ENCODE measurements at regions of chr20 and their contacts with region 1.

Region 1: GRCh38 chr20:1291191-1291741 is 25.2 kb downstream of the SNPH start:
- DNase-seq: no peak
- H3K4me3 Mint-ChIP-seq: no peak overlapping the region
- H3K27ac Mint-ChIP-seq: no peak overlapping the region
- H3K4me1 Mint-ChIP-seq: peaks cover 54% of the 10 kb centered on the region
- H3K27me3 Mint-ChIP-seq: no peaks in the 10 kb centered on the region

Region 2: GRCh38 chr20:1225783-1226654 is 65.2 kb before region 1 on chr20 and contains the start of gene RAD21L1:
- CTCF ChIA-PET with region 1: no interaction called
- intact Hi-C with region 1: loop called (anchors 2 kb)
- DNase-seq: peak; percentile 88
- H3K4me3 Mint-ChIP-seq: peak within 1 kb of the TSS; percentile 83
- H3K27ac Mint-ChIP-seq: no peak within 1 kb of the TSS
- H3K4me1 Mint-ChIP-seq: peaks cover 10% of the 10 kb centered on the region
- H3K27me3 Mint-ChIP-seq: peaks cover 6% of the 10 kb centered on the region
- total RNA-seq, gene RAD21L1: not detected

Region 3: DNA sequence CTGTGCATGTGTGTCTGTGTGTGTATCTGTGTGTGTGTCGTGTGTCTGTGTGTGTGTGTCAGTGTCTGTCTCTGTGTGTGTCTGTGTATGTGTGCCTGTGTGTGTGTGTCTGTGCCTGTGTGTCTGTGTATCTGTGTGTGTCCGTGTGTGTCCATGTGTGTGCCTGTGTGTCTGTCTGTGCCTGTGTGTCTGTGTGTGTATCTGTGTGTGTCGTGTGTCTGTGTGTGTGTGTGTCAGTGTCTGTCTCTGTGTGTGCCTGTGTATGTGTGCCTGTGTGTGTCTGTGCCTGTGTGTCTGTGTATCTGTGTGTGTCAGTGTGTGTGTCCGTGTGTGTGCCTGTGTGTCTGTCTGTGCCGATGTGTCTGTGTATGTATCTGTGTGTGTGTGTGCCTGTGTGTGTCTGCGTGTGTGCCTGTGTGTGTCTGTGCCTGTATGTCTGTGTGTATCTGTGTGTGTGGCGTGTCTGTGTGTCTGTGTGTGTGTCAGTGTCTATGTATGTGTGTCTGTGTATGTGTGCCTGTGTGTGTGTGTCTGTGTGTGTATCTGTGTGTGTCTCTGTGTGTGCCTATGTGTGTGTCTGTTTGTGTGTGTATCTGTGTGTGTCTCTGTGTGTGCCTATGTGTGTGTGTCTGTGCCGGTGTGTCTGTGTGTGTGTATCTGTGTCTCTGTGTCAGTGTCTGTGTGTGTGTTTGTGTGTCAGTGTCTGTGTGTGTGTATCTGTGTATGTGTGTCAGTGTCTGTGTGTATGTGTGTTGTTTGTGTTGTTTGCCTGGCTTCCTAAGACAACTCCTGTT is 13.5 kb before region 1 on chr20:
- CTCF ChIA-PET with region 1: interaction called, 5 read pairs
- intact Hi-C with region 1: loop called (anchors 1 kb)
- DNase-seq: no peak
- H3K4me3 Mint-ChIP-seq: no peak overlapping the region
- H3K27ac Mint-ChIP-seq: no peak overlapping the region
- H3K4me1 Mint-ChIP-seq: peaks cover 40% of the 10 kb centered on the region
- H3K27me3 Mint-ChIP-seq: no peaks in the 10 kb centered on the region